ENCODE measurements at regions of chr10 and their contacts with region 1.

Region 1: GRCh38 chr10:117167789-117168674 is 29.3 kb upstream of the KCNK18 start:
- DNase-seq: peak; percentile 13
- H3K4me3 ChIP-seq: peak overlapping the region in 1 of 3 experiments; percentile 10
- H3K27ac ChIP-seq: no peak overlapping the region
- H3K4me1 ChIP-seq: peaks cover 30% of the 10 kb centered on the region
- H3K27me3 ChIP-seq: peaks cover 46% of the 10 kb centered on the region
- CTCF ChIP-seq: peak; percentile 50 to 78

Region 2: DNA sequence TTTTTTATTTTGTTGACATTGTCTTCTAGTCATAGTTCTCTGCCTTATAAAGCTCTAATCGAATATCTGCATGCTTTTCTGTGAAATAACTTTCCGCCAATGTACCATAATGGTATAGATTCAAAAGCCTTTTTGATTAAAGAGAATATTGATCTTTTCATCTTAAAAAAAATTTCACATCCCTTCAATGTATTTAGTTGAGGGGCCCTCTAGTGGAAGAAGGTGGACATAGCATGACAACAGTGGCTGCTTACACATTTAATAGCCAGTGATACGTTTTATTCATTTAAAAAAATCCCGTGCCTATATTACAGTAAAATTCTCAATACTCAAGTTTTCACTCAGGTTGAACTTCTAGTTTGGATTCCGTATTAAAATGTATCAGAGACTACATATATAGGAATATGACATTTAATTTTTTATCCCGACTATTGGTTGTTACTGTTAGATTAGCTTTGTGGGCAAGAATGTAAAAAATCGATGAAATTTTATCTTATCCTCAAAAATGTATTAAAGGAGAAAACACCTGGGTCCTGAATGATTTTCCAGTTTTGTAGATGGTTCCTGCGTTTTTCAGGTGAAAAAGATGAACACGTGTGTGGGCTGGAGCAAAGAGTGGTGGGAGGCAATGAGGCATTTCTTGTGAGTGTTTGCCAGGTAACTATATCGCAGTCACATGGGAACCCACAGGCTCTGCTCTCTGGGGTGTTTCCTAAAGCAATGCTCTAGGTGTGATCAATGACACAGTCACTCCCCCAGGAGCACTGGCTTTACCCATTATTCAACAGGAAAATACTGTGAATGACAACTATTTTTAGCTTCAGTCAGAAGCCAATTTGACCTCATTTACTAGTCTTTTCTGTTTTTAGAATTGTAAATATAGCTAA is 646.4 kb before region 1 on chr10:
- CTCF ChIA-PET with region 1: no interaction called
- dilution Hi-C with region 1: no loop called
- in situ Hi-C with region 1: no loop called
- intact Hi-C with region 1: loop called (anchors 10 kb)
- DNase-seq: peak; percentile 30
- H3K4me3 ChIP-seq: no peak overlapping the region
- H3K27ac ChIP-seq: no peak overlapping the region
- H3K4me1 ChIP-seq: no peaks in the 10 kb centered on the region
- H3K27me3 ChIP-seq: no peaks in the 10 kb centered on the region
- CTCF ChIP-seq: peak; percentile 73 to 77

Region 3: DNA sequence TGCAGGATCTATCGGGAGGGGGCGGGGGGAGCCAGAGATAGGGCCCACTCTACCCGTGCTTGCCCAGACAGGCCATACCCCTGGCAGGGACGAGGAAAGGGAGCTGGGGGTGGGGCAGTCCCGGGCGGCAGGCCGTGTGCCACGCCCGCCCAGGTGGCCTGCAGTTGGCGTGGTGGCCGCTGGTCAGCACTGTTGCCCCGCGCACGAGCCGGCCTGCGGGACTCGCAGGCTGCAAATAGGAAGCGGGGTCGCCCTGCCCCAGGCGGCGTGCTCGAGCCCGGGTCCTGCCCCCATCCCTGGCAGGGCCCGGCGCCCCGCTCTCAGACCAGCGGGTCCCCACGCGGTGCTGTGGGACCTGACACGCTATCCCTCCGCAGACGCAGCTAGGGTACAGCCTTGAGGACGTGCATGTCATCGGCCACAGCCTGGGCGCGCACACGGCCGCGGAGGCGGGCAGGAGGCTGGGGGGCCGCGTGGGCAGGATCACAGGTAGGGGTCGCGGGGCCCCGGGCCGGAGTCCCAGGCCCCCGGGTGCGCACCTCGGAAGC is 540.6 kb before region 1 on chr10:
- CTCF ChIA-PET with region 1: interaction called, 3 read pairs
- dilution Hi-C with region 1: no loop called
- in situ Hi-C with region 1: no loop called
- intact Hi-C with region 1: loop called (anchors 2 kb)
- DNase-seq: peak; percentile 23
- H3K4me3 ChIP-seq: peak overlapping the region; percentile 13 to 39 (median 34)
- H3K27ac ChIP-seq: no peak overlapping the region
- H3K4me1 ChIP-seq: peaks cover 7% of the 10 kb centered on the region
- H3K27me3 ChIP-seq: no peaks in the 10 kb centered on the region
- CTCF ChIP-seq: peak; percentile 37 to 65

Region 4: GRCh38 chr10:116690356-116691322 is 477.4 kb before region 1 on chr10:
- CTCF ChIA-PET with region 1: interaction called, 3 read pairs
- dilution Hi-C with region 1: loop called (anchors 10 kb)
- in situ Hi-C with region 1: loop called (anchors 10 to 25 kb)
- intact Hi-C with region 1: no loop called
- DNase-seq: no peak
- H3K4me3 ChIP-seq: no peak overlapping the region
- H3K27ac ChIP-seq: no peak overlapping the region
- H3K4me1 ChIP-seq: no peaks in the 10 kb centered on the region
- H3K27me3 ChIP-seq: no peaks in the 10 kb centered on the region
- CTCF ChIP-seq: no peak

Region 5: DNA sequence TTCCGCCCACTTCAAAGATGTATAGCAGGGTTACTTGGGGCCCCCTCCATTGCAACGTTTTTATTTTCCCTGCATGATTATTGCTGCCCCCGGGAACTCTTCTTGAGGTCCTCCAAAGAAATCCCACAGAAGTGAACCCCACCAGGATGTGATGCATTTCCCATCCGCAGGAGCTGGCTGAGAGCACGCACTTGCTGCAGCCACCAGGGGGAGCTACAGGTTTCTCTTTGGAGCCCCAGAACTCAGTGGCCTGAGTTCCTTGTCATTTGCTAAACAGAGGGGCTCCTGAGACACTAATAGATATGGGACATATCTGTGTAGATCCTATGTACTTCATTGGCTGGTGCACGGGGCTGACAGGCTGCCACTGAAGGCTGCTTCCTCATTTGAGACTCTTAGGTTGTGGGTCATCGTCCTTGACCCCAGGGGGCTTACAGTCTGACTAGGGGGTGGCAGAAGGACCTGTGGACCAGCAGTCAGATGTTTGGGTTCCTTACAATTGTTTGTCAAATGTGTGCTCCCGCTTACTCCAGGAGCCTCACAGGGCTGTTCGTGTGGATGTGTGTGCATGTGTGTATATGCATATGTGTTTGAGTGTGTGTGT is 371.0 kb before region 1 on chr10:
- CTCF ChIA-PET with region 1: interaction called, 7 read pairs
- dilution Hi-C with region 1: no loop called
- in situ Hi-C with region 1: loop called in 1 of 2 experiments (anchors 5 kb)
- intact Hi-C with region 1: loop called (anchors 1 kb)
- DNase-seq: peak; percentile 40
- H3K4me3 ChIP-seq: no peak overlapping the region
- H3K27ac ChIP-seq: no peak overlapping the region
- H3K4me1 ChIP-seq: no peaks in the 10 kb centered on the region
- H3K27me3 ChIP-seq: no peaks in the 10 kb centered on the region
- CTCF ChIP-seq: peak; percentile 89 to 96

Region 6: DNA sequence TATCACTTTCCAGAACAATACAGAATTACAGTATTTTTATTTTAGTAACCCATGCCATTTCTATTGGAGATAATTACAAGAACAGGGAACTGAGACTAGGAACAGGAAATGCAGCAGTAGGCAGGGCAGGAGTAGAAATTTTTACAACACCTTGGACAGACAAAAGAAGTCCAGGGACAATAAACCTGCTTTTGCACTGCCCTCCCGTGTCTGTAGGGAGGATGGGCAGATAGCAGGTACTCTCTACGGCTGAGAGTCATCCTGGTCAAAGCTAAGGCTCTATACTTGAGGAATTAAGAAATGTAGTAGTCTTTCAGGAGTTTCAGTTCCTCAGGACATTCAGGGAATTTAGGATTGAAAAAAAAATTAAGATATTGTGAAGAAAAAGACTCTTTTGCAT is 93.4 kb before region 1 on chr10:
- CTCF ChIA-PET with region 1: no interaction called
- dilution Hi-C with region 1: no loop called
- in situ Hi-C with region 1: no loop called
- intact Hi-C with region 1: no loop called
- DNase-seq: peak; percentile 16
- H3K4me3 ChIP-seq: no peak overlapping the region
- H3K27ac ChIP-seq: no peak overlapping the region
- H3K4me1 ChIP-seq: no peaks in the 10 kb centered on the region
- H3K27me3 ChIP-seq: peaks cover 2% of the 10 kb centered on the region
- CTCF ChIP-seq: peak in 1 of 2 donors; percentile 48

Region 7: GRCh38 chr10:117094856-117095255 is 73.2 kb before region 1 on chr10:
- CTCF ChIA-PET with region 1: no interaction called
- dilution Hi-C with region 1: no loop called
- in situ Hi-C with region 1: no loop called
- intact Hi-C with region 1: no loop called
- DNase-seq: no peak
- H3K4me3 ChIP-seq: no peak overlapping the region
- H3K27ac ChIP-seq: no peak overlapping the region
- H3K4me1 ChIP-seq: no peaks in the 10 kb centered on the region
- H3K27me3 ChIP-seq: peaks cover 3% of the 10 kb centered on the region
- CTCF ChIP-seq: no peak

Region 8: DNA sequence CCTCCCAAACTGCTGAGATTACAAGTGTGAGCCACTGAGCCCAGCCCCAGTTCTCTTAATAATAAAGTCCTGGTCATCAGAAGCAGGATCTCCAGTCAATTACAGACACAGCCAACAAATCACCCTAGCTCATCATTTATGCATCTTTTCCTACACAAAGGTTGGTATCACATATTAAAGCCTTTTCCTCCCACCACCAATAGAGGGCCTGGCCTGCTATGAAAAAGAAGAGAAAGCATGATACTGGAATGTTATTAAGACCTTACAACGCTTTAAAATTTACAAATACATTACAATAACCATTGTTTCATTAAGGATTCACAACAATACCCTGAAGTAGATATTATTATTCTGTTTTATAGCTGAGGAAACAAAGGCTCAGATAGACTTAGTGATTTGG is 55.8 kb before region 1 on chr10:
- CTCF ChIA-PET with region 1: interaction called, 5 read pairs
- dilution Hi-C with region 1: no loop called
- in situ Hi-C with region 1: no loop called
- intact Hi-C with region 1: loop called (anchors 2 kb)
- DNase-seq: peak; percentile 12
- H3K4me3 ChIP-seq: no peak overlapping the region
- H3K27ac ChIP-seq: no peak overlapping the region
- H3K4me1 ChIP-seq: no peaks in the 10 kb centered on the region
- H3K27me3 ChIP-seq: peaks cover 3% of the 10 kb centered on the region
- CTCF ChIP-seq: peak; percentile 42 to 48

Region 9: GRCh38 chr10:117148284-117148683 is 19.7 kb before region 1 on chr10:
- CTCF ChIA-PET with region 1: interaction called, 10 read pairs
- dilution Hi-C with region 1: no loop called
- in situ Hi-C with region 1: no loop called
- intact Hi-C with region 1: no loop called
- DNase-seq: no peak
- H3K4me3 ChIP-seq: no peak overlapping the region
- H3K27ac ChIP-seq: no peak overlapping the region
- H3K4me1 ChIP-seq: no peaks in the 10 kb centered on the region
- H3K27me3 ChIP-seq: peaks cover 16% of the 10 kb centered on the region
- CTCF ChIP-seq: no peak